Mammary epithelial cell (primary cell): ENCODE measurements at regions of chr12 and their contacts with region 1.

Region 1: DNA sequence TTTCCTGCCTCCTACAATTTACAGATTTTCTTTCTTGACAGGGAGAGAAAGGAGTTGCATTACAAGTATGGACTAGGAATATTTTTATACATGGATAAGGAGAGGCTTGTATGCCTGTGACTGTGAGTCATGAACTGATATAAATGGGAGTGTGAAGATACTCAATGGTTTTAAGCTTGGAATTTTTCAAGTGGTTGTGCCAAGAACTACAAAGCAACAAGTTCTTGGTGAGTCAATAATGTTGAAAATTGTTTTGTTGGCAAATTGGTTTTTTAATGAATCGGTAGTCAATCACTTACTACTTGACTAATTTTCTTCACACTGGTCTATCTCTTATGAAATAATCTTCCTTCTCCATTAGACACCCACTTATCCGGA is 58.9 kb upstream of the HMGA2 start:
- DNase-seq: peak; percentile 91
- H3K4me3 ChIP-seq: peak overlapping the region in 2 of 3 experiments; percentile 7 to 19
- H3K27ac ChIP-seq: peak overlapping the region; percentile 96
- H3K4me1 ChIP-seq: peaks cover 39% of the 10 kb centered on the region
- H3K27me3 ChIP-seq: no peaks in the 10 kb centered on the region
- CTCF ChIP-seq: no peak

Region 2: GRCh38 chr12:65525491-65526161 is 239.8 kb before region 1 on chr12:
- CTCF ChIA-PET with region 1: no interaction called
- dilution Hi-C with region 1: no loop called
- in situ Hi-C with region 1: no loop called
- intact Hi-C with region 1: no loop called
- DNase-seq: peak; percentile 68
- H3K4me3 ChIP-seq: no peak overlapping the region
- H3K27ac ChIP-seq: peak overlapping the region; percentile 92
- H3K4me1 ChIP-seq: peaks cover 45% of the 10 kb centered on the region
- H3K27me3 ChIP-seq: no peaks in the 10 kb centered on the region
- CTCF ChIP-seq: no peak

Region 3: DNA sequence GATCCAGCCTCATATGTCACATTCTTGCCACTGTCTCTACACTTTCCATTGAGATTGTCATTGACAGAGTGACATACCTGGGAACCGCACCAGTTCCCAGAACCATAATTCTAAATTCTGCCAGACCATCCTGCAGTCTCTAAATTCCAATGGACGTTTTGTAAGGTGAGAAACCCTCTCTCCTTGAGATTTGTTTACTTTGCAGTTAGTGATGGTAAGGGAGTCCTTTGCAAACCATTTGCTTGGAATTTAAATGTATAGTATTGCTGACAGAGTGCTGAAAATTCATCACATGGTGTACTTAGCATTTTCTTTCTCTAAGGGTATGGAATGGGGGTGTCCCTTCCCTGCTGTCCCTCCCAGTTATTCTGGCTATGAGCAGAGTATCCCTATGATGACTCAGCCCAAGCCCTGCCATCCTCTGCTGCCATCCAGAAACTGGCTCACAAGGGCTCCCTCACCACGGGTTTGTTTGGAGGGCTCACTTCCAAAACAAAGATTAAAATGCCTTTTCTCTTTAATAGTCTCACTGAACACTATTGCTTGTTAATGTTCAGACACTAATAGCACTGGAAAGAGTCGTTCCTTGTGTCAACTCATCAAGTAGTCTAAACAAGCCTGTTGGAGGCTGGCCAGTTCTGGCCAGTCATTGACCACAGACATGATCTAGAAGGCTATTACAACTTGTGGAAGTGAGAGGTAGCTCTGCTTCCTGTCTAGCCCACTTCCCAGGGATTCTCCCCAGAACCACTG is 70.1 kb before region 1 on chr12:
- CTCF ChIA-PET with region 1: interaction called, 4 read pairs
- dilution Hi-C with region 1: no loop called
- in situ Hi-C with region 1: no loop called
- intact Hi-C with region 1: loop called (anchors 2 kb)
- DNase-seq: peak; percentile 98
- H3K4me3 ChIP-seq: no peak overlapping the region
- H3K27ac ChIP-seq: peak overlapping the region; percentile 67
- H3K4me1 ChIP-seq: peaks cover 28% of the 10 kb centered on the region
- H3K27me3 ChIP-seq: no peaks in the 10 kb centered on the region
- CTCF ChIP-seq: no peak

Region 4: GRCh38 chr12:65740873-65741600 is 24.4 kb before region 1 on chr12:
- CTCF ChIA-PET with region 1: no interaction called
- dilution Hi-C with region 1: no loop called
- in situ Hi-C with region 1: no loop called
- intact Hi-C with region 1: loop called (anchors 2 kb)
- DNase-seq: peak; percentile 73
- H3K4me3 ChIP-seq: peak overlapping the region; percentile 54 to 90 (median 77)
- H3K27ac ChIP-seq: peak overlapping the region; percentile 49
- H3K4me1 ChIP-seq: peaks cover 14% of the 10 kb centered on the region
- H3K27me3 ChIP-seq: no peaks in the 10 kb centered on the region
- CTCF ChIP-seq: no peak

Region 5: GRCh38 chr12:65808580-65808979 is 43.2 kb after region 1 on chr12:
- CTCF ChIA-PET with region 1: no interaction called
- dilution Hi-C with region 1: loop called (anchors 5 kb)
- in situ Hi-C with region 1: no loop called
- intact Hi-C with region 1: no loop called
- DNase-seq: no peak
- H3K4me3 ChIP-seq: no peak overlapping the region
- H3K27ac ChIP-seq: no peak overlapping the region
- H3K4me1 ChIP-seq: peaks cover 9% of the 10 kb centered on the region
- H3K27me3 ChIP-seq: no peaks in the 10 kb centered on the region
- CTCF ChIP-seq: no peak